A549 (cell line): ENCODE measurements at regions of chr6 and their contacts with region 1.

Region 1: DNA sequence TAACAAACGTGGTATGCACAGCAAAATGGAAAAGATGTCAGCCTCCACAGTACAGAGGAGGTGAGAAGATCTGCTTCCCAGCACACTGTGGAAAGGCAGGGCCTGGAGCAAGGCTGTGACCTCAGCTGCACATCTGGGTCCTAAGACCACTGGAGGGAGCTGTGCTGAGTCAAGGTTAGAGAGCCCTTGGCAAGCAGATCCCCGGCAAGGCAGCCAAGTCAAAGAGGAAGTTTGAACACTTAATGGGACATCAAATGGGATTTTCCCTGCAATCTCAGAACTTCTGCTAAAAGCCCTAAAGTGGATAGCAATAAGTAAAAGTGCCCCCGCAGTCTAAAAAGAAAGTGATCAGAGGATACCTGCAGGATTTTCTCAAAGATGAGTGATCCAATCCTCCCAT is 39.5 kb downstream of the UNC5CL start:
- DNase-seq: peak; percentile 53 to 81
- ATAC-seq: peak; percentile 60 to 80; a peak in 5 of 6 replicates
- H3K4me3 ChIP-seq: no peak overlapping the region
- H3K27ac ChIP-seq: peak overlapping the region; percentile 96 to 97
- H3K4me1 ChIP-seq: peaks cover 48% of the 10 kb centered on the region
- CTCF ChIP-seq: peak; percentile 41
- EP300 ChIP-seq: no peak
- POLR2A ChIP-seq: no peak
- RAD21 ChIP-seq: peak in 1 of 2 experiments; percentile 39; a peak in 2 of 5 replicates

Region 2: GRCh38 chr6:40957616-40958492 is 41.7 kb before region 1 on chr6:
- CTCF ChIA-PET with region 1: interaction called, 4 read pairs
- POLR2A ChIA-PET with region 1: interaction called, 16 read pairs
- DNase-seq: peak; percentile 66 to 87
- ATAC-seq: peak; percentile 80 to 82
- H3K4me3 ChIP-seq: no peak overlapping the region
- H3K27ac ChIP-seq: peak overlapping the region; percentile 86 to 89
- H3K4me1 ChIP-seq: peaks cover 70% of the 10 kb centered on the region
- CTCF ChIP-seq: no peak
- EP300 ChIP-seq: peak; percentile 67 to 78; a peak in 2 of 5 replicates
- POLR2A ChIP-seq: no peak
- RAD21 ChIP-seq: 0 out of 5 replicates have a peak, but pooled peaks of 1 of the 2 experiments have one; percentile 19

Region 3: GRCh38 chr6:41011673-41012072 is 12.1 kb after region 1 on chr6:
- CTCF ChIA-PET with region 1: no interaction called
- POLR2A ChIA-PET with region 1: no interaction called
- DNase-seq: no peak
- ATAC-seq: no peak
- H3K4me3 ChIP-seq: no peak overlapping the region
- H3K27ac ChIP-seq: peak overlapping the region; percentile 84 to 92
- H3K4me1 ChIP-seq: peaks cover 29% of the 10 kb centered on the region
- CTCF ChIP-seq: no peak
- EP300 ChIP-seq: no peak
- POLR2A ChIP-seq: no peak
- RAD21 ChIP-seq: no peak